Activated CD8-positive, alpha-beta T cell treated with anti-CD3 and anti-CD28 coated beads, Interleukin-2, amount 10 ng/mL, durations not matched to agents 7 days and 5 days (primary cell): ENCODE measurements at regions of chr17 and their contacts with region 1.

Region 1: DNA sequence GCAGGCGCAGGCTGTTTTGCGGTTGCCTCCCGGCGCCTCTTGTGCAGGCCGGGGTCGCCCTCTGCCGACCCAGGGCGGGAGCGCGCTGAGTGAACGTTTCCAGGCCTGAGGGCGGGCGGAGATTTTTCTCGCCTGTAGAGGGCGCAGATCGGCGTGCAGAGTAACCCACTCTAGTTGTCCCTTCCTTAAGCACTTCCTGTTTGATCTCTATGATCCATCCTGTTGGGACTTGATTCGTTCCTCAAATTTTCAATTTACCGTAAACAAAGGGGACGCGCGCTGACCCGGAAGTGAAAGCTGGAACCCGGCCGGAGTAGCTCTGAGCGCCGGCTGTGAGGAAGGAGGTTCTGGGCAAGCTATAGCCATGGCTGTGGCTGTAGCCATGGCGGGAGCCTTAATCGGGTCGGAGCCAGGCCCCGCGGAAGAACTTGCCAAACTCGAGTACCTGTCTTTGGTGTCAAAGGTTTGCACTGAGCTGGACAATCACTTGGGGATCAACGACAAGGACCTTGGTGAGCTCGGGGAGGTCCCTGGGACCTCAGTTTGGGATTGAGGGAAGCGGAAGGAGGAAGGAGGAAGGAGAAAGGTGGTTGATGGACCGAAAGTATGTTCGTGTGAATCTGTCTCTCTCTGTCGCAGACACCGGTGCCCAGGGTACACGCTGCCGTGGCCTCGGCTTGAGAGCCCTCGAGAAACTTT is at the start of gene DHX8:
- DNase-seq: peak; percentile 98
- ATAC-seq: peak; percentile 99
- H3K4me3 Mint-ChIP-seq: peak within 1 kb of the TSS; percentile 100
- H3K27ac Mint-ChIP-seq: peak within 1 kb of the TSS; percentile 99
- H3K4me1 Mint-ChIP-seq: peaks cover 29% of the 10 kb centered on the region
- H3K27me3 Mint-ChIP-seq: peaks cover 3% of the 10 kb centered on the region
- total RNA-seq, gene DHX8: 52.7 to 56.4 TPM

Region 2: DNA sequence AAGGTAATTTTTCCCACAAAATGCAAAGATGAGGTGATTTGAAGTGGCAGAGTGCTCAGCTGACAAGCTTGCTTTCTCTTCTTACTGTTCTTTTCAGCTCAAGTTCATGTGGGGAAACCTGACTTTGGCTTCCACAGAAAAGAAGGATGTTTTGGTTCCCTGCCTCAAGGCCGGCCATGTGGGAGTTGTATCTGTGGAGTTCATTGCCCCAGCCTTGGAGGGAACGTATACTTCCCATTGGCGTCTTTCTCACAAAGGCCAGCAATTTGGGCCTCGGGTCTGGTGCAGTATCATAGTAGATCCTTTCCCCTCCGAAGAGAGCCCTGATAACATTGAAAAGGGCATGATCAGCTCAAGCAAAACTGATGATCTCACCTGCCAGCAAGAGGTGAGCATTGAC is 290.6 kb before region 1 on chr17:
- CTCF ChIA-PET with region 1: no interaction called
- POLR2A ChIA-PET with region 1: no interaction called
- DNase-seq: no peak
- ATAC-seq: no peak
- H3K4me3 Mint-ChIP-seq: no peak overlapping the region
- H3K27ac Mint-ChIP-seq: no peak overlapping the region
- H3K4me1 Mint-ChIP-seq: no peaks in the 10 kb centered on the region
- H3K27me3 Mint-ChIP-seq: no peaks in the 10 kb centered on the region

Region 3: DNA sequence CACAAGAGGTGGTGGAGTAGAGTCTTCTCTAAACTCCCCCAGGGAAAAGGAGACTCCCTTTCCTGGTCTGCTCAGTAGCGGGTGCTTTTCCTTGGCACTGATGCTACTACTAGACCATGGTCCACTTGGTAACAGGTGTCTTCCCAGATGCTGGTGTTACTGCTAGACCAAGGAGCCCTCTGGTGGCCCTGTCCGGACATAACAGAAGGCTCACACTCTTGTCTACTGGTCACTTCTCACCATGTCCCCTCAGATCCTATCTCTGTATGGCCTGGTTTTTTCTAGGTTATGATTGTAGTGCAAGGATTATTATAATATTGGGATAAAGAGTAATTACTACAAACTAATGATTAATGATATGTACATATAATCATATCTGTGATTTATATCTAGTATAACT is 134.7 kb before region 1 on chr17:
- CTCF ChIA-PET with region 1: interaction called, 13 read pairs
- POLR2A ChIA-PET with region 1: no interaction called
- DNase-seq: no peak
- ATAC-seq: no peak
- H3K4me3 Mint-ChIP-seq: no peak overlapping the region
- H3K27ac Mint-ChIP-seq: no peak overlapping the region
- H3K4me1 Mint-ChIP-seq: peaks cover 8% of the 10 kb centered on the region
- H3K27me3 Mint-ChIP-seq: no peaks in the 10 kb centered on the region

Region 4: GRCh38 chr17:43367737-43368242 is 116.0 kb before region 1 on chr17:
- CTCF ChIA-PET with region 1: interaction called, 39 read pairs
- POLR2A ChIA-PET with region 1: interaction called, 99 read pairs
- DNase-seq: peak; percentile 78
- ATAC-seq: peak; percentile 56
- H3K4me3 Mint-ChIP-seq: peak overlapping the region; percentile 92
- H3K27ac Mint-ChIP-seq: peak overlapping the region; percentile 100
- H3K4me1 Mint-ChIP-seq: peaks cover 52% of the 10 kb centered on the region
- H3K27me3 Mint-ChIP-seq: no peaks in the 10 kb centered on the region

Region 5: GRCh38 chr17:43393944-43394482 is 89.8 kb before region 1 on chr17:
- CTCF ChIA-PET with region 1: interaction called, 393 read pairs
- POLR2A ChIA-PET with region 1: interaction called, 43 read pairs
- DNase-seq: peak; percentile 95
- ATAC-seq: peak; percentile 61
- H3K4me3 Mint-ChIP-seq: no peak overlapping the region
- H3K27ac Mint-ChIP-seq: peak overlapping the region; percentile 10
- H3K4me1 Mint-ChIP-seq: peaks cover 47% of the 10 kb centered on the region
- H3K27me3 Mint-ChIP-seq: no peaks in the 10 kb centered on the region

Region 6: DNA sequence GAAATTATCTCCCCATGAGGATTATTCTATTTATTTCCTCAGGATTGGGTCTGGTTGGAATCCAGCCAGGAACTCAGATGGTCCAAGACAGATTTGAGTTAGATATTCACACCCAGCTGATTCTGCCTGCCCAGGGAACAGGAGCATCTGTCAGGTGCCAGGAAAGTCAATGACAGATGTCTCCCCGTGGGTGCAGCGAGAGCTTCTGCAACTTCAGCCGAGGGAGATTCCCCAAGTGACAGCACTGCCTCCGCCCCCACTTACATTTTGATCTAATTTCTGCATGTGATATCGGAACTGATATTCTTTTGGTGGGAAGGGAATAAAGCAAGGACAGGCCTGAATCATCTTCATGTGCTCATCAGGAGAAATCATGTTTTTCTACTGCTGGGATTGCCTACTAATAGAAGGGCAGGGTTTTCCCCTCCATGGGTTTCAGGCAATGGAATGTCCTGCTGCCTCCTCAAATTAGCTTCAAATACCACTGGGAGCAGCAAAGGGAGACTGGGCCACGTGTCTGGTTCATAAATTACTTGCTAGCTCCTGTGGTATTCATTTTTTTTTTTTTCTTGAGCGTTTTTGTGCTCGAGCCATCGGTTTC is 15.7 kb before region 1 on chr17:
- CTCF ChIA-PET with region 1: interaction called, 16 read pairs
- POLR2A ChIA-PET with region 1: no interaction called
- DNase-seq: no peak
- ATAC-seq: no peak
- H3K4me3 Mint-ChIP-seq: no peak overlapping the region
- H3K27ac Mint-ChIP-seq: no peak overlapping the region
- H3K4me1 Mint-ChIP-seq: no peaks in the 10 kb centered on the region
- H3K27me3 Mint-ChIP-seq: peaks cover 12% of the 10 kb centered on the region

Region 7: GRCh38 chr17:43562679-43563599 is 79.1 kb after region 1 on chr17:
- CTCF ChIA-PET with region 1: no interaction called
- POLR2A ChIA-PET with region 1: no interaction called
- DNase-seq: no peak
- ATAC-seq: no peak
- H3K4me3 Mint-ChIP-seq: no peak overlapping the region
- H3K27ac Mint-ChIP-seq: no peak overlapping the region
- H3K4me1 Mint-ChIP-seq: no peaks in the 10 kb centered on the region
- H3K27me3 Mint-ChIP-seq: peaks cover 25% of the 10 kb centered on the region

Region 8: GRCh38 chr17:43814714-43815113 is 330.9 kb after region 1 on chr17:
- CTCF ChIA-PET with region 1: no interaction called
- POLR2A ChIA-PET with region 1: no interaction called
- DNase-seq: no peak
- ATAC-seq: no peak
- H3K4me3 Mint-ChIP-seq: no peak overlapping the region
- H3K27ac Mint-ChIP-seq: no peak overlapping the region
- H3K4me1 Mint-ChIP-seq: no peaks in the 10 kb centered on the region
- H3K27me3 Mint-ChIP-seq: no peaks in the 10 kb centered on the region